ENCODE measurements at regions of chr7 and their contacts with region 1.

Region 1: GRCh38 chr7:98014352-98014751 is 24.4 kb upstream of the OCM2 start:
- DNase-seq: no peak
- H3K4me3 Mint-ChIP-seq: no peak overlapping the region
- H3K27ac Mint-ChIP-seq: no peak overlapping the region
- H3K4me1 Mint-ChIP-seq: no peaks in the 10 kb centered on the region
- H3K27me3 Mint-ChIP-seq: no peaks in the 10 kb centered on the region
- CTCF ChIP-seq: no peak

Region 2: DNA sequence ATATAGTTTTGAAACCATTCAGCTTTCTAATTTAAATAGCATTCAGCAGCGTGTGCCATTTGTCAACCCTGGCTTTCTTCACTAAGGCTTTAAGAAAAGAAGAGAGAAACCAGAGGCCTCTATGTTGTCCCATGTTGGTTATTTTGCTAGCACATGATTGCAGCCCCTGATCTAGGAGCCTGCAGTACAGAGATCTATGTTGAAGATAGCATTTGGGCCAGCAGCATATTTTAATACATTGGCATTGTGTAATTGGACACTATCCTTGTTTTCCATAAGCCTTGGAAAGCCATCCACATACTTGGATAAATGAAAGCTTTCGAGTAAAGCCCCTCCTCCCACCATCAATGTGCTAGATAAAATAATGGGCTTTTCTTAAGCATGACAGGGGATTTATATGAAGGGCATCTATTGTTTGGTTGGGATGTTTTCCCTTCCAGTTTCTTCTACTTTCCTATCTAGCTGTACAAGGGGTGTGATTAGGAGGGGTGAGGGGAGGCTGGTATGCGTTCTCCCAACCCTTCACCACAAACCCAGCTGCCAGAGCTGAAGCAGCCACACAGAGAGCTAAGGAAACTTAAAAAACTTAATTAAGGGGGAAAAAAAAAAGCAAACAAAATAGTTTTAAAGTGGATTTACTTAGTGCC is 919.9 kb before region 1 on chr7:
- CTCF ChIA-PET with region 1: interaction called, 10 read pairs
- POLR2A ChIA-PET with region 1: no interaction called
- intact Hi-C with region 1: no loop called
- DNase-seq: no peak
- H3K4me3 Mint-ChIP-seq: no peak overlapping the region
- H3K27ac Mint-ChIP-seq: no peak overlapping the region
- H3K4me1 Mint-ChIP-seq: no peaks in the 10 kb centered on the region
- H3K27me3 Mint-ChIP-seq: peaks cover 40% of the 10 kb centered on the region
- CTCF ChIP-seq: no peak

Region 3: GRCh38 chr7:97104719-97105238 is 909.6 kb before region 1 on chr7:
- CTCF ChIA-PET with region 1: interaction called, 14 read pairs
- POLR2A ChIA-PET with region 1: no interaction called
- intact Hi-C with region 1: loop called (anchors 10 kb)
- DNase-seq: peak; percentile 79
- H3K4me3 Mint-ChIP-seq: no peak overlapping the region
- H3K27ac Mint-ChIP-seq: no peak overlapping the region
- H3K4me1 Mint-ChIP-seq: no peaks in the 10 kb centered on the region
- H3K27me3 Mint-ChIP-seq: peaks cover 32% of the 10 kb centered on the region
- CTCF ChIP-seq: peak; percentile 89

Region 4: DNA sequence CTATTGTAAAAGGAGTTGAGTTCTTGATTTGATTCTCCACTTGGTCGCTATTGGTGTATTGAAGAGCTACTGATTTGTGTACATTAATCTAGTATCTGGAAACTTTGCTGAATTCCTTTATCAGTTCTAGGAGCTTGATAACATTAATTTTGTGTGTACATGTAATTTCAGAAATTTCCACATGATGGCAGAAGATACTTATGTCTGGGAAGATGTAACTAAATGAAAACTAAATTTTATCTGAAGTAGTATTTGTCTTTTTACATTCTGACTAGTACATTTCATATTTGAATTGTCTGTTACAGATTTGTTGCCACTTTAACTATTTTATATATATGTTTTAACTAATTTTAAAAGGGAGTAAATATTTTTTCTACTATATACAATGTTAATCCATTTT is 869.3 kb before region 1 on chr7:
- CTCF ChIA-PET with region 1: interaction called, 3 read pairs
- POLR2A ChIA-PET with region 1: no interaction called
- intact Hi-C with region 1: loop called (anchors 5 kb)
- DNase-seq: peak; percentile 45
- H3K4me3 Mint-ChIP-seq: no peak overlapping the region
- H3K27ac Mint-ChIP-seq: no peak overlapping the region
- H3K4me1 Mint-ChIP-seq: no peaks in the 10 kb centered on the region
- H3K27me3 Mint-ChIP-seq: no peaks in the 10 kb centered on the region
- CTCF ChIP-seq: peak; percentile 62

Region 5: GRCh38 chr7:97845622-97846203 is 168.6 kb before region 1 on chr7:
- CTCF ChIA-PET with region 1: interaction called, 23 read pairs
- POLR2A ChIA-PET with region 1: no interaction called
- intact Hi-C with region 1: loop called (anchors 5 kb)
- DNase-seq: peak; percentile 43
- H3K4me3 Mint-ChIP-seq: no peak overlapping the region
- H3K27ac Mint-ChIP-seq: no peak overlapping the region
- H3K4me1 Mint-ChIP-seq: no peaks in the 10 kb centered on the region
- H3K27me3 Mint-ChIP-seq: peaks cover 16% of the 10 kb centered on the region
- CTCF ChIP-seq: peak; percentile 24

Region 6: GRCh38 chr7:97872025-97872669 is 142.2 kb before region 1 on chr7 and contains the start of gene ASNS:
- CTCF ChIA-PET with region 1: interaction called, 14 read pairs
- POLR2A ChIA-PET with region 1: interaction called, 4 read pairs
- intact Hi-C with region 1: loop called (anchors 1 kb)
- DNase-seq: peak; percentile 96
- H3K4me3 Mint-ChIP-seq: peak within 1 kb of the TSS; percentile 86
- H3K27ac Mint-ChIP-seq: peak within 1 kb of the TSS; percentile 83
- H3K4me1 Mint-ChIP-seq: peaks cover 12% of the 10 kb centered on the region
- H3K27me3 Mint-ChIP-seq: no peaks in the 10 kb centered on the region
- CTCF ChIP-seq: no peak
- total RNA-seq, gene ASNS: 191 and 303 TPM in 2 replicates

Region 7: GRCh38 chr7:98000356-98000755 is 14.0 kb before region 1 on chr7:
- CTCF ChIA-PET with region 1: interaction called, 15 read pairs
- POLR2A ChIA-PET with region 1: no interaction called
- intact Hi-C with region 1: no loop called
- DNase-seq: no peak
- H3K4me3 Mint-ChIP-seq: no peak overlapping the region
- H3K27ac Mint-ChIP-seq: no peak overlapping the region
- H3K4me1 Mint-ChIP-seq: no peaks in the 10 kb centered on the region
- H3K27me3 Mint-ChIP-seq: peaks cover 38% of the 10 kb centered on the region
- CTCF ChIP-seq: no peak

Region 8: DNA sequence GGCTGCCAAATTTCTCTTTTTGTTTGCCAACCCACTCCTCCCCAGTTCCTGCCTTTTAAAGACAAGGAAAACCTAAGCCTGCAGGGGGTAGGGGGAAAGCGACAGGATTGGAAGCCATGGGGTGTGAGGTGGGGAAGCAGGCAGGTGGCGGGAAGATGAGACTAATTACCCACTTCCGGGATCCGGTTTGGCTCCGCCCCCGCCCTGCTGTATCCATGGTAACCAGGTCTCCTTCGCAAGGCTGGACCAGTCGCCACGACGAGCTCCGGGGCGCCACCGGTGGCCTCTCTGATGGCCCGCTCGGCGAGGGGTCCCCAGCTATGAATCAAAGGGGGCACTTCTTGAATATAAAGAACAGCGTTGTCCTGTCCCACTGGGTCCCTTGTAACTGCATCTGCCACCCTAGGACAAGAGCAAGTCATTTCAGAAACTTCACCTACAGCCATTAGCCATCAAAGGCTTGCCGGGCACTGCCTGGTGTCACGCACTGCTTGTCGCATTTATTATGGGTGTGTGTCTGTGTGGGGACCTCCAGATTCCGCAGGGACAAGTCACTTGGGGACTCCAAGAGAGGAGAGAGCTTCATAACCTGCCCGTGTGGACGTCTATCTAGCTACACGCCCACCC is 36.9 kb after region 1 on chr7:
- CTCF ChIA-PET with region 1: no interaction called
- POLR2A ChIA-PET with region 1: no interaction called
- intact Hi-C with region 1: no loop called
- DNase-seq: no peak
- H3K4me3 Mint-ChIP-seq: no peak overlapping the region
- H3K27ac Mint-ChIP-seq: no peak overlapping the region
- H3K4me1 Mint-ChIP-seq: peaks cover 24% of the 10 kb centered on the region
- H3K27me3 Mint-ChIP-seq: no peaks in the 10 kb centered on the region
- CTCF ChIP-seq: no peak